Endothelial cell of umbilical vein (primary cell): ENCODE measurements at regions of chr7 and their contacts with region 1.

Region 1: GRCh38 chr7:124784879-124785818 is 19.6 kb upstream of the GPR37 start:
- DNase-seq: peak; percentile 76
- H3K4me3 ChIP-seq: no peak overlapping the region
- H3K27ac ChIP-seq: no peak overlapping the region
- H3K4me1 ChIP-seq: peaks cover 14% of the 10 kb centered on the region
- H3K27me3 ChIP-seq: peaks cover 0 to 4% of the 10 kb centered on the region in 2 experiments
- CTCF ChIP-seq: peak; percentile 77 to 84
- POLR2A ChIP-seq: no peak

Region 2: DNA sequence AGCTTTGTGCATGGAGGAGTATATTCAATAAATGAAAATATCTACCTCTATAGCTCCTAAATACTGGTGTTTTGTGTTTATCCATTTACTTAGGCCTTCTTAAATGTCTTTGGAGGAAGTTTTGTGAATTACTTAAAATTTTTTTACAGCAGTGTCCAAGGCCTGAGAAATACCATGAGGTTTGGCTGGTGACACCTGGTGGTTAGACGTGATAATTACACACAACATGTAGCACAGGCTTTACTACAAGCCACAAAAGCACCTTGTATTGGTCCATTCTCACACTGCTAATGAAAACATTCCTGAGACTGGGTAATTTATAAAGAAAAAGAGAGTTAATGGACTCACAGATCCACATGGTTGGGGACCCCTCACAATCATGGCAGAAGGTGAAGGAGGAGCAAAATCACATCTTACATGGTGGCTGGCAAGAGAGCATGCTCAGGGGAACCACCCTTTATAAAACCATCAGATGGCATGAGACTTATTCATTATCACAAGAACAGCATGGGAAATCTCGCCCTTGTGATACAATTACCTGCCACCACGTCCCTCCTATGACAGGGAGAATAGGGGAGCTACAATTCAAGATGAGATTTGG is 919.5 kb before region 1 on chr7:
- CTCF ChIA-PET with region 1: no interaction called
- POLR2A ChIA-PET with region 1: no interaction called
- dilution Hi-C with region 1: no loop called
- intact Hi-C with region 1: loop called (anchors 5 kb)
- DNase-seq: peak; percentile 84
- H3K4me3 ChIP-seq: no peak overlapping the region
- H3K27ac ChIP-seq: peak overlapping the region; percentile 34
- H3K4me1 ChIP-seq: peaks cover 9% of the 10 kb centered on the region
- H3K27me3 ChIP-seq: no peaks in the 10 kb centered on the region
- CTCF ChIP-seq: peak; percentile 41 to 56
- POLR2A ChIP-seq: no peak

Region 3: GRCh38 chr7:124032369-124033094 is 752.6 kb before region 1 on chr7 and contains the start of gene TMEM229A:
- CTCF ChIA-PET with region 1: no interaction called
- POLR2A ChIA-PET with region 1: no interaction called
- dilution Hi-C with region 1: no loop called
- intact Hi-C with region 1: loop called (anchors 5 kb)
- DNase-seq: peak; percentile 46
- H3K4me3 ChIP-seq: peak within 1 kb of the TSS in 2 of 3 experiments; percentile 21 to 28
- H3K27ac ChIP-seq: no peak within 1 kb of the TSS
- H3K4me1 ChIP-seq: peaks cover 10% of the 10 kb centered on the region
- H3K27me3 ChIP-seq: peaks cover 36 to 71% of the 10 kb centered on the region in 2 experiments
- CTCF ChIP-seq: no peak
- POLR2A ChIP-seq: no peak
- total RNA-seq, gene TMEM229A: not detected in 2 replicates

Region 4: GRCh38 chr7:124101173-124101768 is 683.9 kb before region 1 on chr7:
- CTCF ChIA-PET with region 1: interaction called, 217 read pairs
- POLR2A ChIA-PET with region 1: no interaction called
- dilution Hi-C with region 1: no loop called
- intact Hi-C with region 1: loop called (anchors 1 kb)
- DNase-seq: peak; percentile 44
- H3K4me3 ChIP-seq: no peak overlapping the region
- H3K27ac ChIP-seq: no peak overlapping the region
- H3K4me1 ChIP-seq: no peaks in the 10 kb centered on the region
- H3K27me3 ChIP-seq: no peaks in the 10 kb centered on the region
- CTCF ChIP-seq: peak; percentile 43 to 57
- POLR2A ChIP-seq: no peak

Region 5: GRCh38 chr7:124152859-124153692 is 632.1 kb before region 1 on chr7:
- CTCF ChIA-PET with region 1: interaction called, 80 read pairs
- POLR2A ChIA-PET with region 1: no interaction called
- dilution Hi-C with region 1: no loop called
- intact Hi-C with region 1: loop called (anchors 1 kb)
- DNase-seq: peak; percentile 87
- H3K4me3 ChIP-seq: no peak overlapping the region
- H3K27ac ChIP-seq: peak overlapping the region; percentile 63
- H3K4me1 ChIP-seq: peaks cover 21% of the 10 kb centered on the region
- H3K27me3 ChIP-seq: no peaks in the 10 kb centered on the region
- CTCF ChIP-seq: peak; percentile 22 to 31
- POLR2A ChIP-seq: no peak

Region 6: GRCh38 chr7:124765401-124766352 is 19.5 kb before region 1 on chr7 and contains the start of gene GPR37:
- CTCF ChIA-PET with region 1: interaction called, 68 read pairs
- POLR2A ChIA-PET with region 1: no interaction called
- dilution Hi-C with region 1: no loop called
- intact Hi-C with region 1: loop called (anchors 1 kb)
- DNase-seq: peak; percentile 73
- H3K4me3 ChIP-seq: peak within 1 kb of the TSS; percentile 24 to 52 (median 48)
- H3K27ac ChIP-seq: no peak within 1 kb of the TSS
- H3K4me1 ChIP-seq: peaks cover 4% of the 10 kb centered on the region
- H3K27me3 ChIP-seq: peaks cover 2 to 7% of the 10 kb centered on the region in 2 experiments
- CTCF ChIP-seq: no peak
- POLR2A ChIP-seq: no peak
- total RNA-seq, gene GPR37: 2.1 and 2.2 TPM in 2 replicates

Region 7: DNA sequence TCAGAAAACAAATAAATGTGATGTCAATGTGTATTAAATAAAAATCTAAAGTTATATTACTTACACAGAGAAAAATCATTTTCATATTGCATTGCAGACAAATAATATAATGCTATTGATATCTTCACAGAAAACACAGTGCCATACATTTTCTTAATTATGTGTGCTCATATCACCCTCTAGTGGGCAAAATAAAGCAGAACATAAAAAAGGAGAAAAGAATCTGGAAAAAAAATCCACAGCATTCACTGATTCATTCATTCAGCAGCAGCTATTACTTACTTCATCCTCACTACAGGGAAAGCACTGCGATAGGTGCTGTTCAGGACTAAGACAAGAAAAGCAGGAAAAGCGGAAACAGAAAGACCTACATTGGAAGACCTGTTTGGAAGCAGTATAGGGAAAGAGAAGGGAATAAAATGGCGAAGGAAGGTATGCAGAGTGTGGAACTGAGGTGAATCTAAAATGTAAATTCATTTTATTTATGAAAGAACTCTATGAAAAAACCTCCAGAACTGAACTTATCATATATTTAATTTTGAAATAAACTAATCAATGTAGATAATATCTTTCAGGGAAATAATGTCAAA is 71.2 kb after region 1 on chr7:
- CTCF ChIA-PET with region 1: interaction called, 4 read pairs
- POLR2A ChIA-PET with region 1: no interaction called
- dilution Hi-C with region 1: no loop called
- intact Hi-C with region 1: loop called (anchors 5 kb)
- DNase-seq: peak; percentile 61
- H3K4me3 ChIP-seq: no peak overlapping the region
- H3K27ac ChIP-seq: no peak overlapping the region
- H3K4me1 ChIP-seq: no peaks in the 10 kb centered on the region
- H3K27me3 ChIP-seq: no peaks in the 10 kb centered on the region
- CTCF ChIP-seq: peak; percentile 31 to 44
- POLR2A ChIP-seq: no peak